ENCODE measurements at regions of chr2 and their contacts with region 1.

Region 1: DNA sequence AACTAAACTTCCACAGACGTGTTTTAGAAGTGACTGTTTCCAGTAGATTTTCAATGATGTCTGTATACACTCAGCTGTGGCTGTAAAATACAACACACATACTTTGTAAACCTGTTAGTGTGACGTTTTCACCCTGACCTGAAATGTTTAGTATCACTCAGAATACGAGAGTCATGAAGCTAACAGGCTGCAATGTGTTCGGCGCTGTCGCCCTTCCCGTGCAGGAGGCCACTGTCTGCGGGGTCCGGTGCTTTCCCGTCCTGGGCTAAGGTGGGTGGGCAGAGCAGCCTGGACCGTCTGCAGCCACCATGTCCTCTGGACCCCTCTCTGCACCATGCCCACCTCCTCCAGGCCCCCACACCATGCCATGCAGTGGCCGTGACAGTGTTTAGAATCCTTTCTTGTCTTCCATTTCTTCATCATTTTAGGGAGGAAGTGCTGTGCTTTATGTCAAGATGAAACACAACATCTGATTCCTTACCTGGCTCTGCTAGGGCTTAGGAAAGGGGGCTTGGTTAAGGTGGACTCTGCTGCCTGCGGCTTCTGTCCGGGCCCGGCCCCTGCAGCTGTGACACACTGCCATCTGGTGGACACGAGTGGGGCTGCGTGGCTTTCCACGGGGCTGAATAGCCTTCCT is 53.8 kb upstream of the RBM44 start:
- DNase-seq: peak; percentile 62
- ATAC-seq: peak; percentile 76
- H3K4me3 ChIP-seq: no peak overlapping the region; a peak in 1 of 6 replicates
- H3K27ac ChIP-seq: peak overlapping the region; percentile 71
- H3K4me1 ChIP-seq: peaks cover 54% of the 10 kb centered on the region
- H3K27me3 ChIP-seq: no peaks in the 10 kb centered on the region
- CTCF ChIP-seq: peak; percentile 99
- EP300 ChIP-seq: no peak
- POLR2A ChIP-seq: no peak
- RAD21 ChIP-seq: peak; percentile 98

Region 2: DNA sequence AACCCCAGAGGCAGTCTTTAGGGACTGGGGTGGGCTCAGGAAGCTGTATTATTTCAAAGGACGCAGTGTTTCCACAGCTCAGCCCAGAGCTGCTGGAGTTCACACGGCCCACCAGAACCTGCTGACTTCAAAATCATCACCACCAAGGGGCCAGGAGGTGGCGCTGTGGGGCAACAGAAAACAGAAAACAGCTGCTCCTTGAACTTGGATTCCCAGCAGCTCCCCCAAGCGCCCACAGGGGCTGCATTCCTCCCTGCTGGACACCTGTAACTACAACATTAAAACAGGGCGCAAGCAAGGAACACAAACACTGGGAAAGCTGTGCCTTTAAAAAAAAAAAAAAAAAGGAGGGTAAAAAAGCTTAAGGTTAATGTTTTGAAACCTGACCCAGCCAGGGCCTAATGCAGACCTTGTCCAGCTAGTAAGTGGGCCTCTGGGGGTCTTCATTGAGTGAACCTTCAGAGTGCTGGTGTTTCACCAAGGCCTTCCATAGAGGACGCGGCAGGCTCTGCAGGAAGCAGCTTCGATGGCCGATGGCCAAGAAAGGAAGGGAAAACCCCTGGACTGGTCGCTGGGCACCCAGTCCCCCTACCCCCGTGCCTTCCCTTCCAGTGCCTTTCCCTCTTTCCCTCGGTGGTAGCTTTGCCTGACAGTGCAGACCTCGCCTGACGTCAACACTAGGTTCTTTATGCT is 231.8 kb before region 1 on chr2:
- CTCF ChIA-PET with region 1: interaction called, 19 read pairs
- POLR2A ChIA-PET with region 1: no interaction called
- in situ Hi-C with region 1: no loop called
- intact Hi-C with region 1: loop called (anchors 2 kb)
- DNase-seq: peak; percentile 92
- ATAC-seq: peak; percentile 93
- H3K4me3 ChIP-seq: peak overlapping the region in 1 of 3 experiments; percentile 27; a peak in 2 of 6 replicates
- H3K27ac ChIP-seq: no peak overlapping the region
- H3K4me1 ChIP-seq: peaks cover 11% of the 10 kb centered on the region
- H3K27me3 ChIP-seq: peaks cover 12 to 67% of the 10 kb centered on the region in 2 experiments; a peak in 3 of 5 replicates
- CTCF ChIP-seq: peak; percentile 97
- EP300 ChIP-seq: 0 out of 4 replicates have a peak, but pooled peaks of 1 of the 2 experiments have one; percentile 23
- POLR2A ChIP-seq: no peak
- RAD21 ChIP-seq: peak; percentile 98

Region 3: DNA sequence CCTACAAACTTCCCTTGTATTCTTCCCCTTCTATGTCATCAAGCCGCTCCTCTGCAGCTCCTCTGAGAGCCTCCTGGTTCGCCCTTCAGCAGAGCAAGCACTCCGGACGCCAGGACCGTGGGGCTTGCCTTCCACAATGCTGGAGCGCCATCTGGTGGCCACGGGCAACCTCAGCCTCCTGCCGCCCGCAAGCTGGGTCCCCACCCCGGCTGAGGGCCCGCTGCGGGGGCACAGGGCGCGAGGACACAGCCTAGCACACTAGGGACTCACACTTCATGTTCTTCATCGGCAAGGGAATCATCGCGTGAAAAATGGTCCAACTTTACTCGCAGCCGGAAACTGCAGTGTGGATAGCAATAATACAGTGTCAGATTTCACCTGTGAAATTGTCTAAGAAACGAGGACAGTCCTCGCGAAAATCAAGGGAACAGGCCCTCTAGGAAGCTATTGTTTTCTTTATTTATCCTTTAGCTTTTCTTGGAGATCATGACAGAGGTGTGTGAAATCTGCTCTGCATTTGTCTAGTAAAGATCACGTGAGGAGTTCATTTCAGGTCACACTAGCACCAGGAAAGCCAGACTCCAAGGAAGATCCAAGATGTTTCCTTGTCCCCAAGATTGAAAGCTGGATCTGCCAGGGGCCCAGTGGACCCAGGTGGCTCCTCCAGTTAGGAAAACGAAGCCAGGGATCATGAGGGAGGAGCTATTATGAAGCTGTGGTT is 172.6 kb before region 1 on chr2:
- CTCF ChIA-PET with region 1: no interaction called
- POLR2A ChIA-PET with region 1: no interaction called
- in situ Hi-C with region 1: no loop called
- intact Hi-C with region 1: loop called (anchors 2 kb)
- DNase-seq: peak; percentile 84
- ATAC-seq: peak; percentile 91
- H3K4me3 ChIP-seq: no peak overlapping the region; a peak in 1 of 6 replicates
- H3K27ac ChIP-seq: no peak overlapping the region
- H3K4me1 ChIP-seq: peaks cover 19% of the 10 kb centered on the region
- H3K27me3 ChIP-seq: peaks cover 0 to 13% of the 10 kb centered on the region in 2 experiments; a peak in 3 of 5 replicates
- CTCF ChIP-seq: peak; percentile 100
- EP300 ChIP-seq: no peak
- POLR2A ChIP-seq: 0 out of 4 replicates have a peak, but pooled peaks of 1 of the 2 experiments have one; percentile 30
- RAD21 ChIP-seq: peak; percentile 100

Region 4: DNA sequence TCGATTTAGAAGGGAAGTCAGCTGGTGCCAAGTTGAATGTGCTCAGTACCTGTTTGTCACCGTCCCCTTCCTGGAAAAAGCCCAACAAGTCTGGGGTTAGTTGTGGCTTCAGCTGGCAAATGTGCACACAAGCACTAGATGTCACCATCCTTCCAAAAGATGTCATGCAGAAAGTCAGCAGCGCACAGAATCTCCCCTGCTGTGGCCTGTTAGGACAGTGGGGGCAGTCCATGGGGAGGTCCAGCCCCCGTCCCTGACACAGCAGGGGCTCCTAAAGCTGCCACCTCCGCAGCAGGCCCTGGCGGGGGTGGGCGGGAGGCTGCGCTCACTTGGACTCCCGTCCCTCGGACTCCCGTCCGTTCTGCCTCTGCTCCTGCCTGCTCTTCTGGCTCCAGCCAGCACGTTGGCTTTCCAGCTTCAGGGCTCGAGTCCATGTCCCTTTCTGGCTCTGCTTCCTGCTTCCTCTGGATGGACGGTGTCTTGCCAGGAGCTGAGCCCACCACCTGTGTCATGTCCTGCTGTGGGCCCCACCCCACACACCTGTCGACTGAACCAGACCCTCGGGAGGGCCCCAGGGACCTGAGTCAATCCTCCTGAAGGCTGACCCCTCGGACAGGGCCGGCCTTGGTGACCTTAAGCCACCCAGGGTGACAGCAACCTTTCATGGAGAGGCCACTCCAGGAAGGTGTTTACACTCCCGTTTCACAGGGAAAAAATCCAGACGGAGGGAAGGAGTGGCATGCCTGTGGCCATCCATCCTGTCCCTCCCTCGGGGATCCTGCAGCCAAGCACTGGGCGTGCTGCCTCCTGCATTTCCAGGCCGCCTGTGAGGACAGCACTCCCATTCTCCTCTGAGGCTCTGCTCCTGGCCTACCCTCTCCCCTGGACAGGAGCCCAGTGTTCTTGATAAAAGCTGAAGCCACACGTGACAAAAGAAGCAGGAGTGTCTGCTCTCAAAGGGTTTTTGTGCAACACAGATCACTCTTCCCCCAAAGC is 162.7 kb before region 1 on chr2:
- CTCF ChIA-PET with region 1: interaction called, 20 read pairs
- POLR2A ChIA-PET with region 1: interaction called, 3 read pairs
- in situ Hi-C with region 1: no loop called
- intact Hi-C with region 1: loop called (anchors 1 kb)
- DNase-seq: peak; percentile 82
- ATAC-seq: peak; percentile 66
- H3K4me3 ChIP-seq: peak overlapping the region in 1 of 3 experiments; percentile 38; a peak in 3 of 6 replicates
- H3K27ac ChIP-seq: peak overlapping the region; percentile 66
- H3K4me1 ChIP-seq: peaks cover 57% of the 10 kb centered on the region
- H3K27me3 ChIP-seq: no peaks in the 10 kb centered on the region
- CTCF ChIP-seq: peak; percentile 82
- EP300 ChIP-seq: peak in 1 of 2 experiments; percentile 52; a peak in 2 of 4 replicates
- POLR2A ChIP-seq: no peak; a peak in 1 of 4 replicates
- RAD21 ChIP-seq: peak; percentile 70; the same call in 1 of the 2 replicates

Region 5: GRCh38 chr2:237674731-237675276 is 69.9 kb before region 1 on chr2:
- CTCF ChIA-PET with region 1: interaction called, 107 read pairs
- POLR2A ChIA-PET with region 1: interaction called, 5 read pairs
- in situ Hi-C with region 1: loop called (anchors 5 kb)
- intact Hi-C with region 1: loop called (anchors 1 kb)
- DNase-seq: peak; percentile 66
- ATAC-seq: peak; percentile 93
- H3K4me3 ChIP-seq: peak overlapping the region in 2 of 3 experiments; percentile 13 to 53; a peak in 3 of 6 replicates
- H3K27ac ChIP-seq: peak overlapping the region; percentile 46
- H3K4me1 ChIP-seq: peaks cover 83% of the 10 kb centered on the region
- H3K27me3 ChIP-seq: no peaks in the 10 kb centered on the region
- CTCF ChIP-seq: peak; percentile 36; the same call in 1 of the 2 replicates
- EP300 ChIP-seq: no peak; a peak in 1 of 4 replicates
- POLR2A ChIP-seq: peak; percentile 24 to 34; a peak in 1 of 4 replicates
- RAD21 ChIP-seq: no peak

Region 6: GRCh38 chr2:237685408-237685807 is 59.3 kb before region 1 on chr2:
- CTCF ChIA-PET with region 1: interaction called, 22 read pairs
- POLR2A ChIA-PET with region 1: interaction called, 5 read pairs
- in situ Hi-C with region 1: no loop called
- intact Hi-C with region 1: loop called (anchors 2 kb)
- DNase-seq: peak; percentile 66
- ATAC-seq: peak; percentile 74
- H3K4me3 ChIP-seq: no peak overlapping the region
- H3K27ac ChIP-seq: no peak overlapping the region
- H3K4me1 ChIP-seq: peaks cover 83% of the 10 kb centered on the region
- H3K27me3 ChIP-seq: no peaks in the 10 kb centered on the region
- CTCF ChIP-seq: peak; percentile 80
- EP300 ChIP-seq: no peak
- POLR2A ChIP-seq: no peak
- RAD21 ChIP-seq: peak; percentile 49; the same call in 1 of the 2 replicates

Region 7: GRCh38 chr2:237714690-237715458 is 29.9 kb before region 1 on chr2:
- CTCF ChIA-PET with region 1: interaction called, 11 read pairs
- POLR2A ChIA-PET with region 1: interaction called, 3 read pairs
- in situ Hi-C with region 1: no loop called
- intact Hi-C with region 1: loop called (anchors 1 kb)
- DNase-seq: peak; percentile 35
- ATAC-seq: peak; percentile 77
- H3K4me3 ChIP-seq: peak overlapping the region; percentile 52 to 72 (median 61)
- H3K27ac ChIP-seq: peak overlapping the region; percentile 77
- H3K4me1 ChIP-seq: peaks cover 50% of the 10 kb centered on the region
- H3K27me3 ChIP-seq: no peaks in the 10 kb centered on the region
- CTCF ChIP-seq: no peak
- EP300 ChIP-seq: no peak
- POLR2A ChIP-seq: no peak
- RAD21 ChIP-seq: no peak

Region 8: GRCh38 chr2:238743243-238744065 is 998.7 kb after region 1 on chr2:
- CTCF ChIA-PET with region 1: no interaction called
- POLR2A ChIA-PET with region 1: no interaction called
- in situ Hi-C with region 1: no loop called
- intact Hi-C with region 1: no loop called
- DNase-seq: no peak
- ATAC-seq: no peak
- H3K4me3 ChIP-seq: no peak overlapping the region
- H3K27ac ChIP-seq: no peak overlapping the region
- H3K4me1 ChIP-seq: no peaks in the 10 kb centered on the region
- H3K27me3 ChIP-seq: peaks cover 0 to 38% of the 10 kb centered on the region in 2 experiments; a peak in 4 of 5 replicates
- CTCF ChIP-seq: no peak
- EP300 ChIP-seq: no peak
- POLR2A ChIP-seq: no peak
- RAD21 ChIP-seq: no peak

Measured in HepG2 (cell line).